ENCODE measurements at regions of chr1 and their contacts with region 1.

Region 1: DNA sequence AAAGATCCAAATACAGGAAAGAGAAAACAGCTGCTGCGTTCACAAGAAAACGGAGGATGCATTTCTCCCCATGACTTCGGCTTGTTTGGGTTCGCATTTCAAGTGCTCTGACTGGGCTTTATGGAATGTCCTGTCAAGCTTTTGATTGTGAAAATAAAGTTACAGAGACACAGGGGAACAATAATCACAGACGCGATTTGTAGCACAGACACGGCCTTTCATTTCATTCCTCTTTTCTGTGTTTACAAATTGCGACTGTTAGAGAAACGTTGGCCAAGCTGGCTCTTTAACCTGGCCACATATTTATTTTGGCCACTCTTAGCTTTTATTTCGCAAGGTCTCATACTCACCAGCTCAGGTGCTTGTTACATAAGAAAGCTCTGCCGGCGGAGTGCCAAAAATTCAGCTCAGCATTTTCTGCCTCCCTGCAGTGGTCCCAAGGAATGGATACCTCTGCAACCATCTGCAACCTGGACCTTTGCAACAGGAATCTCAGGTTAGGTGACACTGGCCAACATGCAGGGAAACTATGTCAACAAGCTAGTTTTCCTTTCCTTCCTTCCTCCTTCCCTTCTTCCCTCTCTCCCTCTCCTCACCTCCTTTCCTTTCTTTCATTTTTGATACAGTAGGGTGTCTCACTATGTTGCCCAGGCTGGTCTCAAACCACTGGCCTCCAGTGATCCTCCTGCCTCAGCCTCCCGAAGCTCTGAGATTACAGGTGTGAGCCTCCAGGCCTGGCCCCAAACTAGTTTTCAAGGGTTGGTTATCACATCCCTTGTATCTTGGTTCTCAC is 58.2 kb upstream of the SLC45A1 start:
- DNase-seq: peak; percentile 86
- ATAC-seq: peak; percentile 42
- H3K4me3 ChIP-seq: peak overlapping the region; percentile 56
- H3K27ac ChIP-seq: peak overlapping the region; percentile 97
- H3K4me1 ChIP-seq: peaks cover 30% of the 10 kb centered on the region
- H3K27me3 ChIP-seq: no peaks in the 10 kb centered on the region
- CTCF ChIP-seq: no peak

Region 2: DNA sequence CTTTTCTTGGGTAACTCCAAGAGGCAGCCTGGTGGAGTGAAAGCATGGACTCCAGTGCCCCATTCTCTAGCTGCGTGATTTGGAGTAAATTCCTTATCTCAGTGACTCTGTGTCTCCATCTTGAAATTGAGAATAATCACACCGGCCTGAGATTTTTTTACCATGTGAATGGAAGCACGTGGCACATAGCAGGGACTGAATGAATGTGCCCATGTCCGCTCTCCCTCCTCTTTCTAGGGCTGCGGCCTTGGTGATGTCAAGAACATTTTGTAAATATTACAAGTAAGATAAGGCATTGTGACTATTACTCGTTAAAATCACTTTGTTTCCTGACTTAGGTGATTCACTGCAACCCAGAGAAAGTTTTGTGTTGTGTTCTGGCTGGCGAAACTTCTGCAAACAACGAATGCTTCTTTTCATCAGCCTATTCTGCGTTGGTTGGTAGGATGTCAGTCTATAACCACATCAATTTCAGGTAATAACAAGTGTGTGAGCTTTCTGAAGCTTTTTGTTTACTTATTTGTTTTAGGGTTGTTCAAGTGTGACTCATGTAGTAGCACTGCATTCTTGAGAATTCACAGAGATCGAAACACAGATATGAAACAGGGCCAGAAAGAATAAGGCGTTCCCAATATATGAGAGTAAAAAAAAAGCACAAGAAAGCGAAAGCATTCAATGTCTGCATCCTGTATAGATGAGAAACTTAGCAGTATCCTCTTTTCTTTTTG is 77.5 kb before region 1 on chr1:
- CTCF ChIA-PET with region 1: no interaction called
- POLR2A ChIA-PET with region 1: no interaction called
- intact Hi-C with region 1: loop called (anchors 1 kb)
- DNase-seq: peak; percentile 98
- ATAC-seq: peak; percentile 90
- H3K4me3 ChIP-seq: no peak overlapping the region
- H3K27ac ChIP-seq: peak overlapping the region; percentile 99
- H3K4me1 ChIP-seq: peaks cover 27% of the 10 kb centered on the region
- H3K27me3 ChIP-seq: no peaks in the 10 kb centered on the region
- CTCF ChIP-seq: no peak

Region 3: GRCh38 chr1:8203056-8203455 is 56.6 kb before region 1 on chr1:
- CTCF ChIA-PET with region 1: interaction called, 6 read pairs
- POLR2A ChIA-PET with region 1: interaction called, 7 read pairs
- intact Hi-C with region 1: loop called (anchors 2 kb)
- DNase-seq: no peak
- ATAC-seq: no peak
- H3K4me3 ChIP-seq: no peak overlapping the region
- H3K27ac ChIP-seq: peak overlapping the region; percentile 98
- H3K4me1 ChIP-seq: peaks cover 53% of the 10 kb centered on the region
- H3K27me3 ChIP-seq: no peaks in the 10 kb centered on the region
- CTCF ChIP-seq: no peak

Region 4: GRCh38 chr1:8238851-8239305 is 20.8 kb before region 1 on chr1:
- CTCF ChIA-PET with region 1: no interaction called
- POLR2A ChIA-PET with region 1: no interaction called
- intact Hi-C with region 1: loop called (anchors 1 kb)
- DNase-seq: peak; percentile 66
- ATAC-seq: peak; percentile 55
- H3K4me3 ChIP-seq: peak overlapping the region; percentile 33; the same call in 1 of the 2 replicates
- H3K27ac ChIP-seq: peak overlapping the region; percentile 86
- H3K4me1 ChIP-seq: peaks cover 29% of the 10 kb centered on the region
- H3K27me3 ChIP-seq: no peaks in the 10 kb centered on the region
- CTCF ChIP-seq: peak; percentile 44; the same call in 1 of the 2 replicates

Region 5: GRCh38 chr1:8314346-8315280 is 54.9 kb after region 1 on chr1:
- CTCF ChIA-PET with region 1: no interaction called
- POLR2A ChIA-PET with region 1: interaction called, 3 read pairs
- intact Hi-C with region 1: loop called (anchors 1 kb)
- DNase-seq: peak; percentile 90
- ATAC-seq: peak; percentile 79
- H3K4me3 ChIP-seq: no peak overlapping the region
- H3K27ac ChIP-seq: peak overlapping the region; percentile 62
- H3K4me1 ChIP-seq: peaks cover 29% of the 10 kb centered on the region
- H3K27me3 ChIP-seq: no peaks in the 10 kb centered on the region
- CTCF ChIP-seq: peak; percentile 91

Measured in PC-3 (cell line).